ENCODE measurements at regions of chr11 and their contacts with region 1.

Region 1: DNA sequence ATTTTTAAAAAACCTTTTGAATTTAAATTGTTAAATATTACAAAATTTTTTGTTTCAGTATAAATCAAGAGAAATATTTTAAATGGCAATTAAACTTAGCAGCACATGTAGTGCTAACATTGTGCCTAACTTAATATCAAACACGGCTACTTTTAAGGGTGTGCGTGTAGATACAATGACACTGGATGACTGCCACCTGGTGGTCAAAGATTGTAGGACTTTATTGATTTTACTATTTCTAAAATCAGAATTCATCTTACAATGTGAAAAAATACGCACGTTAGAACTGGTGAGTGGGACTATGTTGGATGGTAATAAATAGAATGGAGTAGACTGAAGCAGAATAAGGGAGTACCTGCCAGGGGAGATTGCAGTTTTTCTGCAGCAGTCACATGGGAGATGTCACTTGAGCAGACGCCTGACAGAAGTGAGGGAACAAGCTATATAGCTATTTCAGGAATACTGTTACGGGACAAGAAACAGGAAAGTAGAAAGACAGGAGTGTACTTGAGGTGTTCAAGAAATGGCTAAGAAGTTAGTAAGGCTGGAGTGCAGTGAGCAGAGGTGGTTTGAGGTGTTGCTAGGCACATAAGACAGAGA is 52.9 kb downstream of the UVRAG start:
- DNase-seq: peak; percentile 63
- ATAC-seq: peak; percentile 47
- H3K4me3 Mint-ChIP-seq: no peak overlapping the region
- H3K27ac Mint-ChIP-seq: no peak overlapping the region
- H3K4me1 Mint-ChIP-seq: peaks cover 14% of the 10 kb centered on the region
- H3K27me3 Mint-ChIP-seq: no peaks in the 10 kb centered on the region
- CTCF ChIP-seq: peak; percentile 77

Region 2: DNA sequence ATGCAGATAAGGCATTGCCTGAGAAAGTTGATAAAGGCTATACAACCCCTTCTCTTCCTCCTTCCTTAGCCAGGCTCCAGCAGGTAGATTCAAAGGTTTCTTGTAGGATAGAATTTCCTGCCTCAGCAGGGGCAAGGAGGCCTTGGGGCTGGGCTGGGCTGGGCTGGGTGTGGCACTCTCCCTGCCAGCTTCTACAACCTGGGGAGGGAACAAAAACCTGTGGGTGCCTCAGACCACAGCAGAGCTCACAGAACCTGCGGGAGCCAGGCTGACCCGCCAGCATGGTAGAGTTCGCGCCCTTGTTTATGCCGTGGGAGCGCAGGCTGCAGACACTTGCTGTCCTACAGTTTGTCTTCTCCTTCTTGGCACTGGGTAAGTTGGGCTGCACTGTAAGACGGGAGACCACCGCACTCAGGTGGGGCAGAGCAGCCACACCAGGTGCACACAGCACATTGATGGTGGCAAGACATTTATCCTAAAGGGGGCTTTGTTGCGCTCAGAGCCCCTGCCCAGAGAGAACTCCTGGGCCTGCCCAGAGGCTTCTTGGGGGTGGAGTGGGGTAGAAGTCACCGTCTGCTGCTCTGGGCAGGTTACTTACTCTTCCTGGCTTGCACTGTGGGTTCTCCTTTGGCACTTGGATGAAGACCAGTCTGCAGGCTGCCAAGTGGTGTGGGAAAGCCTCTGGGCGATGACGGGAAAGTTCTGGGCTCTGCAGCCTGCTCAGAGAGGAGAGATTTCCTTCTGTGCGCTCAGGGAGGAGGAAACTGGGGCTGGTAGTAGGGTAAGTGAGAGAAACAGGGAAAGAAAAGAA is 150.1 kb before region 1 on chr11 and contains the start of gene MOGAT2:
- CTCF ChIA-PET with region 1: interaction called, 28 read pairs
- POLR2A ChIA-PET with region 1: no interaction called
- intact Hi-C with region 1: no loop called
- DNase-seq: no peak
- ATAC-seq: no peak
- H3K4me3 Mint-ChIP-seq: no peak within 1 kb of the TSS
- H3K27ac Mint-ChIP-seq: no peak within 1 kb of the TSS
- H3K4me1 Mint-ChIP-seq: no peaks in the 10 kb centered on the region
- H3K27me3 Mint-ChIP-seq: peaks cover 2% of the 10 kb centered on the region
- CTCF ChIP-seq: no peak
- total RNA-seq, gene MOGAT2: not detected

Region 3: DNA sequence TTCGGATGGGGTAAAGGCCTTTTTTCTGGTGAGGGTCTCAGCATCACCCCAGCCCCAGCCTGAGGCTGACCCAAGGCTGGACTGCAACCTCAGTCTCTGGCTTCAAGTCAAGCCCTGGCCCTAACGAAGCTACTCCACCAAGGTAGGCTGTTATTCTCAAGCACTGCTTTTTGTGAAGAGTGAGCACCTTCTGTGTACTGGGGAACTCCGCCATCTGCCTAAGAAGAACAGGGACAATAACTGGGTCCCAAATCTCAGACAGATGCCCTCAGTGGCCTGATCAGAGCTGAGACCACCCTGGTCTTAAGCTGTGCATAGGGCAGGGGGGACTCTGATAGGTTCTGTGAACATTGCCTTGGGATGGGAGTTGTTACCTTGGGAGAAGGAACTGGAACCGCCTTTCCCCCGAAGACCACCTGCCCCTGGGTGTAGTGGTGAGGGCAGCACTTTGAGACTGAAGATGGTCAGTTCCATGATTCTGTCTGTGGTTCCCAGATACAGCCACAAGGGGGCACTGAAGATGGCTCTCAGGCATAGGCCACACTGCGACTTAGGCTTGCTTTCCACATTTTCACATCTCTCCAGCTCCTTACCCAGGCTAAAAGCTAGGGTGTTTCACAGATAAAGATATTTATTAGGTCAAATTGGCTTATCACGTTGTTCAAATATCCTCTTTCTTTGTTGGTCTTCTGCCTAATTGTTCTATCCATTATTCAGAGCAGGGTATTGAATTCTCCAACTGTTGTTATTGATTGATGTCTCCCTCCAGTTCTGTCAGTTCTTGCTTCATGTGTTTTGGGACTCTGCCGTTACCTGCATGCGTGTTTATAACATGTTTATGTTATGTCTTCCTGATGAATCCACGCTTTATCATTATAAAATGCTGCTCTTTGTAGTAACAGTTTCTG is 64.7 kb before region 1 on chr11:
- CTCF ChIA-PET with region 1: interaction called, 119 read pairs
- POLR2A ChIA-PET with region 1: interaction called, 3 read pairs
- intact Hi-C with region 1: loop called (anchors 2 kb)
- DNase-seq: peak; percentile 84
- ATAC-seq: peak; percentile 99
- H3K4me3 Mint-ChIP-seq: no peak overlapping the region
- H3K27ac Mint-ChIP-seq: no peak overlapping the region
- H3K4me1 Mint-ChIP-seq: no peaks in the 10 kb centered on the region
- H3K27me3 Mint-ChIP-seq: no peaks in the 10 kb centered on the region
- CTCF ChIP-seq: peak; percentile 84

Region 4: GRCh38 chr11:75814686-75815344 is 53.1 kb before region 1 on chr11 and contains the start of gene UVRAG:
- CTCF ChIA-PET with region 1: interaction called, 13 read pairs
- POLR2A ChIA-PET with region 1: interaction called, 3 read pairs
- intact Hi-C with region 1: no loop called
- DNase-seq: peak; percentile 98
- ATAC-seq: peak; percentile 94
- H3K4me3 Mint-ChIP-seq: no peak within 1 kb of the TSS
- H3K27ac Mint-ChIP-seq: peak within 1 kb of the TSS; percentile 94
- H3K4me1 Mint-ChIP-seq: peaks cover 9% of the 10 kb centered on the region
- H3K27me3 Mint-ChIP-seq: no peaks in the 10 kb centered on the region
- CTCF ChIP-seq: no peak
- total RNA-seq, gene UVRAG: 14.4 to 15.7 TPM

Region 5: GRCh38 chr11:75850787-75851186 is 17.1 kb before region 1 on chr11:
- CTCF ChIA-PET with region 1: interaction called, 22 read pairs
- POLR2A ChIA-PET with region 1: no interaction called
- intact Hi-C with region 1: no loop called
- DNase-seq: no peak
- ATAC-seq: no peak
- H3K4me3 Mint-ChIP-seq: no peak overlapping the region
- H3K27ac Mint-ChIP-seq: no peak overlapping the region
- H3K4me1 Mint-ChIP-seq: peaks cover 17% of the 10 kb centered on the region
- H3K27me3 Mint-ChIP-seq: no peaks in the 10 kb centered on the region
- CTCF ChIP-seq: no peak

Measured in activated CD8-positive, alpha-beta T cell treated with anti-CD3 and anti-CD28 coated beads for 36 hours (primary cell).